ENCODE measurements at regions of chr1 and their contacts with region 1.

Region 1: DNA sequence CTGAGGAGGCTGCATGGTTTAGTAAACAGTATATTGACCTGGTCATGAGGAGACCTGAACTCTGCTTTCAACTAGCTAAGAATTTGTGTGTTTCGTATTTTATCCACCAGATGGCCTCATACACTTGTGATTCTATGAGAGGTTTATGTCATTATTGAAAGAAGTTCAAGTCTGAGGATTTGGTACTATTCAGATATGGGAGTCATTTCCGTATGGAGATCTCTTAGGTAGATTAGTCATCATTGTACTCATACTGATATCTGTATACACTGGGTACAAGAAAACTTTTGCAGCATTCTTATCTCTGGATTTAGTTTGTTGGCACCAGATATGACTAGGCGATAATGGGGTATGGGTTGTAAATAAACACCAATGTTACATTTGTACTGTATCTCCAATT is 26.6 kb downstream of the ATF6 start:
- DNase-seq: no peak
- H3K4me3 ChIP-seq: no peak overlapping the region
- H3K27ac ChIP-seq: peak overlapping the region in 1 of 59 donors; percentile 8
- H3K27me3 ChIP-seq: no peaks in the 10 kb centered on the region
- CTCF ChIP-seq: peak; percentile 42 to 89 (median 74)

Region 2: GRCh38 chr1:161305867-161306519 is 486.7 kb before region 1 on chr1:
- intact Hi-C with region 1: no loop called
- DNase-seq: peak; percentile 53 to 90 (median 80)
- H3K4me3 ChIP-seq: peak overlapping the region; percentile 41 to 90 (median 77)
- H3K27ac ChIP-seq: peak overlapping the region in 57 of 59 donors; percentile 24 to 86 (median 74)
- H3K27me3 ChIP-seq: no peaks in the 10 kb centered on the region
- CTCF ChIP-seq: peak in 44 of 56 donors; percentile 10 to 58 (median 36)

Region 3: GRCh38 chr1:162040681-162041080 is 247.9 kb after region 1 on chr1:
- intact Hi-C with region 1: loop called (anchors 1 to 5 kb)
- DNase-seq: no peak
- H3K4me3 ChIP-seq: no peak overlapping the region
- H3K27ac ChIP-seq: no peak overlapping the region
- H3K27me3 ChIP-seq: peaks cover 0 to 3% (median 0%) of the 10 kb centered on the region in 45 donors
- CTCF ChIP-seq: peak in 22 of 56 donors; percentile 4 to 39 (median 22)